Natural killer cell (primary cell): ENCODE measurements at regions of chr11 and their contacts with region 1.

Region 1: GRCh38 chr11:1694064-1694845 is 2.7 kb upstream of the KRTAP5-6 start:
- DNase-seq: peak; percentile 85 to 90
- ATAC-seq: peak; percentile 68 to 86 (median 82)
- H3K4me3 ChIP-seq: no peak overlapping the region
- H3K4me3 Mint-ChIP-seq: no peak overlapping the region
- H3K27ac ChIP-seq: no peak overlapping the region
- H3K27ac Mint-ChIP-seq: no peak overlapping the region
- H3K4me1 ChIP-seq: peaks cover 40% of the 10 kb centered on the region
- H3K4me1 Mint-ChIP-seq: peaks cover 30 to 33% of the 10 kb centered on the region in 2 donors
- H3K27me3 ChIP-seq: peaks cover 10% of the 10 kb centered on the region
- H3K27me3 Mint-ChIP-seq: peaks cover 18 to 20% of the 10 kb centered on the region in 2 donors
- CTCF ChIP-seq: peak; percentile 77

Region 2: GRCh38 chr11:1437500-1437899 is 256.8 kb before region 1 on chr11:
- intact Hi-C with region 1: no loop called
- DNase-seq: no peak
- ATAC-seq: no peak
- H3K4me3 ChIP-seq: no peak overlapping the region
- H3K4me3 Mint-ChIP-seq: no peak overlapping the region
- H3K27ac ChIP-seq: no peak overlapping the region
- H3K27ac Mint-ChIP-seq: no peak overlapping the region
- H3K4me1 ChIP-seq: no peaks in the 10 kb centered on the region
- H3K4me1 Mint-ChIP-seq: no peaks in the 10 kb centered on the region
- H3K27me3 ChIP-seq: no peaks in the 10 kb centered on the region
- H3K27me3 Mint-ChIP-seq: no peaks in the 10 kb centered on the region
- CTCF ChIP-seq: no peak

Region 3: GRCh38 chr11:1652771-1653540 is 41.3 kb before region 1 on chr11:
- intact Hi-C with region 1: loop called (anchors 2 kb)
- DNase-seq: peak; percentile 82 to 86
- ATAC-seq: peak; percentile 79 to 99 (median 95)
- H3K4me3 ChIP-seq: no peak overlapping the region
- H3K4me3 Mint-ChIP-seq: no peak overlapping the region
- H3K27ac ChIP-seq: no peak overlapping the region
- H3K27ac Mint-ChIP-seq: no peak overlapping the region
- H3K4me1 ChIP-seq: peaks cover 4% of the 10 kb centered on the region
- H3K4me1 Mint-ChIP-seq: no peaks in the 10 kb centered on the region
- H3K27me3 ChIP-seq: no peaks in the 10 kb centered on the region
- H3K27me3 Mint-ChIP-seq: peaks cover 0 to 27% of the 10 kb centered on the region in 2 donors
- CTCF ChIP-seq: peak; percentile 97

Region 4: DNA sequence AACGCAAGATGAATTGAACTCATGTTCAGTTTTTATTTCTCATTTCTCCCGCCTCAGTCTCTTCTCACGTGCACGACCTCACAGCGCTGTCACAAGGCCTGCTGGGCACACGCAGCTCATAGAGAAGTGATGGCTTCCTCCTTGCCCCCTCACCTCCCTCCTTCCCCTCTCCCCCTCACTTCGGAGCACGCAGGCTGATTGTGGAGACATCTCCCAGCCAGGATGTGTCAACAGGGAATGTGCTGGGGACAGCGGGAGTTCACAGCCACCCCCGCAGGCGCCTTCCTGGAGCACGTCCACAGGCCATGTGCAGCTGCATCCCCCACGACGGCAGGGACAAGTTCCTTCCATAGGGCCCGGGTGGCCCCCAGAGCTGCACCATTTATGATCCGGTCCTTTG is 26.3 kb before region 1 on chr11:
- intact Hi-C with region 1: loop called (anchors 2 kb)
- DNase-seq: no peak
- ATAC-seq: no peak
- H3K4me3 ChIP-seq: no peak overlapping the region
- H3K4me3 Mint-ChIP-seq: no peak overlapping the region
- H3K27ac ChIP-seq: no peak overlapping the region
- H3K27ac Mint-ChIP-seq: no peak overlapping the region
- H3K4me1 ChIP-seq: peaks cover 28% of the 10 kb centered on the region
- H3K4me1 Mint-ChIP-seq: peaks cover 2 to 22% of the 10 kb centered on the region in 2 donors
- H3K27me3 ChIP-seq: peaks cover 19% of the 10 kb centered on the region
- H3K27me3 Mint-ChIP-seq: peaks cover 20 to 24% of the 10 kb centered on the region in 2 donors
- CTCF ChIP-seq: no peak

Region 5: DNA sequence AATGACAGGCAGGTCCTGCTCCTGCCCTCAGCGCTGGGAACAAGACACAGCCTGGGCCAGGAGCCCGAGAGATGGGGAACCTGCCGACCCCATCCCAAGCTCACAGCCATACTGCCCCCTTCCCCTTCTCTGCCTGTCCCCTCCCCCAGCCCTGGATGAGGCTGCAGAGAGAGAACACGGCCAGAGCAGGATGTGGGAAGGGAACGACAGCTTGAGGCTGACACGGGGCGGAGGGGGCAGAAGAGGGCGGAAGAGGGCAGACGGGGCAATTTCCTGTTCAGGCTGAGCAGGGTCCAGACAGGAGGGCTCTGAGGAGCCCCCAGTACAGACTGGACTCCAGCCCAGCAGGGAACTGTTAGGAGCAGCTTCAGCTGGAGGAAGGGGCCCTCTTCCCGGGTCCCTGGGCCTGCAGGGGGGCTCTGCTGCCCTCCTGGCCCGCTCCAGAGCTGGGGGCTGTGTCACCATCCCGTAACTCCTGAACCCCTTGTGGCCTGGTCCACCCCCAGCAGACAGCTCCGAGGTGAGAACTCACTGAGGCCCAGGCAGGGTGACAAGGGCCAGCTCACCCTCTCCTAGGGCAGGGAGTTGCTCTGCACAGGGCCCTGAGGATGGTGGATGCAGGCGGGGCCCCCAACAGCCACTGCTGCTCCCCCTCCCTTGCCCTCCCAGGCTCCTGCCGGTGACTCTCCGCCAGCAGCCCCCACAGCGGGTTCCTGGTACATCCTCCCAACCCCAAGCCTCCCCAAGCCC is 63.8 kb after region 1 on chr11:
- intact Hi-C with region 1: loop called (anchors 2 kb)
- DNase-seq: peak; percentile 65 to 77
- ATAC-seq: peak; percentile 79 to 83 (median 82)
- H3K4me3 ChIP-seq: peak overlapping the region; percentile 22
- H3K4me3 Mint-ChIP-seq: peak overlapping the region; percentile 85
- H3K27ac ChIP-seq: peak overlapping the region; percentile 83
- H3K27ac Mint-ChIP-seq: peak overlapping the region; percentile 86 to 93
- H3K4me1 ChIP-seq: peaks cover 97% of the 10 kb centered on the region
- H3K4me1 Mint-ChIP-seq: peaks cover 53 to 89% of the 10 kb centered on the region in 2 donors
- H3K27me3 ChIP-seq: no peaks in the 10 kb centered on the region
- H3K27me3 Mint-ChIP-seq: no peaks in the 10 kb centered on the region
- CTCF ChIP-seq: no peak

Region 6: DNA sequence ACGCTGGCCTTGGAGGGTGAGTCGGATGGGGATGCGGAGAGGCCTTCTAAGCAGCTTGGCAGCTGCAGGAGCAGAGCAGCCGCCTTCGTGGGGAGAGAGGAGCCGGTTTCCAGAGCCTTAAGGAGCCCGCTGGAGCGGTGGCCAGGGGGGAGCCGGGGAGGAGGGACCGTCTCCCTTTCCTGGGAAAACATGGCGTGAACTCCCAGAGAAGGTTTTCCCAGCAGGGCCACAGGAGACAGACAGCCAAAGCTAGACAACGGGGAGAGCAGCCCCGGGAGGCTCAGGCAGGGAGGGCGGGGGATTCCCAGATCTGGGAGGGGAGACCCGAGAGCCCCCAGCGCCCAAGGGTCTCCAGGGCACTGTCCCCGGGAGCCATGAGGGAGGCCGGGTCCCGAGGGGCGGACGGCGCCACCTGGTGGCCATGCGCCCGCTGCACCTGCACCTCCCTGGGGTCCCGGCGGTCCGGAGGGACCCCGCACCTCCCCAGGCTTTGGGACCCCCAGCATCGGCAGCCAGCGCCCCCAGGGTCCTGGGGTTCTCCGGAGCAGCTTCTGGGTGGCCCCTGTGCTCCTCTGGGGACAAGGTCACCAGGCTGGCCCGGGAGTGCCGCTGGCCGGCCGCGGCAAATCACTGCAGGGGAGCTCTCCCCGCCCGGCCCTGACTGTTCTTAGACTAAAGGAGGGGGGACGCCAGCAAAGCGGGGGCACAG is 138.1 kb after region 1 on chr11:
- intact Hi-C with region 1: loop called (anchors 1 kb)
- DNase-seq: peak; percentile 74 to 82
- ATAC-seq: peak; percentile 68 to 85 (median 85)
- H3K4me3 ChIP-seq: no peak overlapping the region
- H3K4me3 Mint-ChIP-seq: no peak overlapping the region
- H3K27ac ChIP-seq: no peak overlapping the region
- H3K27ac Mint-ChIP-seq: no peak overlapping the region
- H3K4me1 ChIP-seq: peaks cover 17% of the 10 kb centered on the region
- H3K4me1 Mint-ChIP-seq: peaks cover 0 to 6% of the 10 kb centered on the region in 2 donors
- H3K27me3 ChIP-seq: peaks cover 4% of the 10 kb centered on the region
- H3K27me3 Mint-ChIP-seq: peaks cover 12 to 20% of the 10 kb centered on the region in 2 donors
- CTCF ChIP-seq: peak; percentile 98

Region 7: GRCh38 chr11:2151500-2152257 is 457.4 kb after region 1 on chr11:
- intact Hi-C with region 1: loop called (anchors 2 kb)
- DNase-seq: peak; percentile 76 to 91
- ATAC-seq: peak; percentile 81 to 87 (median 83)
- H3K4me3 ChIP-seq: no peak overlapping the region
- H3K4me3 Mint-ChIP-seq: peak overlapping the region; percentile 56
- H3K27ac ChIP-seq: no peak overlapping the region
- H3K27ac Mint-ChIP-seq: no peak overlapping the region
- H3K4me1 ChIP-seq: peaks cover 7% of the 10 kb centered on the region
- H3K4me1 Mint-ChIP-seq: peaks cover 9 to 10% of the 10 kb centered on the region in 2 donors
- H3K27me3 ChIP-seq: peaks cover 15% of the 10 kb centered on the region
- H3K27me3 Mint-ChIP-seq: peaks cover 19 to 39% of the 10 kb centered on the region in 2 donors
- CTCF ChIP-seq: peak; percentile 76